Calu3 (cell line): ENCODE measurements at regions of chr13 and their contacts with region 1.

Region 1: DNA sequence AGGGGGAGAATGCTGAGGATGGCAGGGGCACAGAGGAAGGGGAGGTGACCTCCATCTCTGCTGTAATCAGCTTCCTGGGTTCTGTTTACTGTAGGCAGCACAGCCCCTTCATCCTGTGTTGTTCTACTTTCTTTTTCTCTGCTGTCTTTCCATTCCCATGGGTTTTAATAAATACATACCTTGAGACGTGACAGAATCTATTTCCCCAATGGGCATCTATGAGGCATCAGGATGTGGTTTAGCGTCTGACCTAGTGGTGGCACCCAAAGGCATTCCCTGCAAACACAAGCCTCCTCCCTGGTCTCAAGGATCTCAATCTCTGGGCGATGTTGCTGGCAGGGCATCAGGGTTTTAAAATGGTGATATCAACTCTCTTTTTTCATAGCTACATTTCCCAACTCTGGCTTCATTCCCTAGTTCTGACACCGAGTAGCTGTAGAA is 60.8 kb downstream of the ALOX5AP start:
- DNase-seq: peak; percentile 45
- H3K4me3 Mint-ChIP-seq: peak overlapping the region; percentile 48
- H3K27ac Mint-ChIP-seq: peak overlapping the region; percentile 34
- H3K4me1 Mint-ChIP-seq: peaks cover 21% of the 10 kb centered on the region
- H3K27me3 Mint-ChIP-seq: no peaks in the 10 kb centered on the region
- CTCF ChIP-seq: no peak

Region 2: DNA sequence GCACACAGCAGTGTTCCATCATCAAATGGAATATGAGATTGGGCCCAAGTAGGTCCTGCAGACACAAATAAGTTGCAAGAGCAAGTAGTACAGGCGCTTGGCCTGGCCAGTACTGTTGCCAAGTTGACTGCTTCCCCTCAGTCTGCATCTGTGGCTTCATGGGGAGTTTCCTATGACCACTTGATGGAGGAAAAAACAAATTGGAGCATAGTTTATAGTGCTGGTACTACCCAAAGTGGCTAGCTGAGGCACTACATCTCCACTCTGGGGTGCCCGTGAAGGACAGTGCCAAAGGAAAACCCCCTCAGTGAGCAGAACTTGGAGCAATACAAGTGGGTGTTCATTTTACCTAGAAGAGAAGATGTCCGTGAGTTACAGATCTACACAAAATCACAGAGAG is 71.4 kb before region 1 on chr13:
- CTCF ChIA-PET with region 1: no interaction called
- intact Hi-C with region 1: no loop called
- DNase-seq: no peak
- H3K4me3 Mint-ChIP-seq: no peak overlapping the region
- H3K27ac Mint-ChIP-seq: no peak overlapping the region
- H3K4me1 Mint-ChIP-seq: no peaks in the 10 kb centered on the region
- H3K27me3 Mint-ChIP-seq: no peaks in the 10 kb centered on the region
- CTCF ChIP-seq: no peak

Region 3: DNA sequence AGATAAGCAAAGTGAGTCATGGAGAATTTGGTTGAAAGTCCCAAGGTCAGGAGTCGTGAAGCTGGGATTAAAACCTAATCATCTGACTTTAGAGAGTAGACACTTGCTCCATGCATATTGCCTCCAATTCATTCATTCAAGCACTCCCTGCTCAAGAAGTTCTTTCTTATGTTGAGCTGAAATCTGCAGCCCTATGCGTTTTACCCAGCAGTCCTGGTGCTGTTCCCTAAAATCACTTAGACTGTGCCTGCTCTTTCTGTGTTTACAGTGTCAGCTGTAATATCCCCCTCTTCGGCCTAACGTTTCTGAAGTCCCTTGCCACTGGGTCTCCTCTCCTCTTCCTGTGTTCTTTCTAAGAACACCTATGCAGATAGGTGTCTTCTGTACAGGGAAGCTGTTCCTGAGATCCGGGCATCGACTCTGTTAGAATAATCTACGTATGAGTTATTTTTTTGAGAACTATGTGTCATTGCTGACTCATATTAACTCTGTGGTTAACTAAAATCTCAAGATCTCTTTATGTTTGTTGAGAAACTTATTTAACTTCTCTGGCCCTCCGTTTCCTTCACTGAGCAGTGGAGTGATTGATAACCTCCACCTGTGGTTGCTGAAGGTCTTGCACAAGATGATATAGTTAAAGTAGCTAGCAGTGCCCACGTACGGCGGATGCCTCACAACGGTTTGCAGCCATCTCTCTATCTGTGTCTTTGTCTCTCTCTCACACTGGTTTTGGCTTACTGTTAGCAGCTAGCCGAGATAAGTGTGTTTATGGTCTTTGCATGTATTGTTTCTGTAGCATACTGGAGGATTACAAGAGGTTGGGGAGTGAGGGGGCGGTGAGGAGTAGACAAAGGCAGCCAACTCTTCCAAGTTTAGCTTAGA is 56.1 kb before region 1 on chr13:
- CTCF ChIA-PET with region 1: interaction called, 3 read pairs
- intact Hi-C with region 1: loop called (anchors 5 kb)
- DNase-seq: peak; percentile 3
- H3K4me3 Mint-ChIP-seq: peak overlapping the region; percentile 56
- H3K27ac Mint-ChIP-seq: peak overlapping the region; percentile 8
- H3K4me1 Mint-ChIP-seq: peaks cover 38% of the 10 kb centered on the region
- H3K27me3 Mint-ChIP-seq: no peaks in the 10 kb centered on the region
- CTCF ChIP-seq: no peak

Region 4: DNA sequence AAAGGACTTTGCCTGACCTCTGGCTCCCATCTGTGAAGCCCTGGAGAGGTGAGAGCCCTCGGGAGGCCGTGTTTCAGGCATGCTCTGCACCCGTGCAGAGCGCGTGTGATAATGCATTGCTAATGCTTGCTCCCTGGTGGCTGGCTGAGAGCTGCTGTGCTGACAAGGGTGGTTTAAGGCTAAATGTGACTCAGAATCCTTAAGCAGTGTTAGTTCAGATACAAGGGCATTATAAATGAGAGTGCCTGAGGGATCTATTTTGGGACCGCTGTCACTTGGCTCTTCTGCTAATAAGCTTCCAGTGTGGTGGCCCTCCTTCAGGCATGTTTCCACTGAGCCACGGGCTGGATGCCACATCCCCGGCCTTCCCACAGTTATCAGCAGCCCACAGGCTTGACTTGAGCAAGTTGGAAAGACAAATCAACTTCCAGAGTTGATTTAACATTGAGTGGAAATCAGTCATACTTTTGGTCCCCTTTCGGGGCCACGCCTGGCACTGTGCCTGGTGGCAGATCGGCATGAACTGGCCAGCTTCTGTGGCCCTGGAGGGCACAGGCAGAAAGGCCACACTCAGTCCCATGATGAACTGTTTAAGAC is 43.9 kb before region 1 on chr13:
- CTCF ChIA-PET with region 1: no interaction called
- intact Hi-C with region 1: no loop called
- DNase-seq: no peak
- H3K4me3 Mint-ChIP-seq: no peak overlapping the region
- H3K27ac Mint-ChIP-seq: no peak overlapping the region
- H3K4me1 Mint-ChIP-seq: no peaks in the 10 kb centered on the region
- H3K27me3 Mint-ChIP-seq: peaks cover 7% of the 10 kb centered on the region
- CTCF ChIP-seq: no peak